ENCODE measurements at regions of chr6 and their contacts with region 1.

Region 1: GRCh38 chr6:169529931-169530751 is 171.7 kb downstream of the WDR27 start:
- DNase-seq: peak; percentile 66
- ATAC-seq: peak; percentile 92
- H3K4me3 Mint-ChIP-seq: no peak overlapping the region
- H3K27ac Mint-ChIP-seq: peak overlapping the region; percentile 61
- H3K4me1 Mint-ChIP-seq: peaks cover 16% of the 10 kb centered on the region
- H3K27me3 Mint-ChIP-seq: no peaks in the 10 kb centered on the region

Region 2: DNA sequence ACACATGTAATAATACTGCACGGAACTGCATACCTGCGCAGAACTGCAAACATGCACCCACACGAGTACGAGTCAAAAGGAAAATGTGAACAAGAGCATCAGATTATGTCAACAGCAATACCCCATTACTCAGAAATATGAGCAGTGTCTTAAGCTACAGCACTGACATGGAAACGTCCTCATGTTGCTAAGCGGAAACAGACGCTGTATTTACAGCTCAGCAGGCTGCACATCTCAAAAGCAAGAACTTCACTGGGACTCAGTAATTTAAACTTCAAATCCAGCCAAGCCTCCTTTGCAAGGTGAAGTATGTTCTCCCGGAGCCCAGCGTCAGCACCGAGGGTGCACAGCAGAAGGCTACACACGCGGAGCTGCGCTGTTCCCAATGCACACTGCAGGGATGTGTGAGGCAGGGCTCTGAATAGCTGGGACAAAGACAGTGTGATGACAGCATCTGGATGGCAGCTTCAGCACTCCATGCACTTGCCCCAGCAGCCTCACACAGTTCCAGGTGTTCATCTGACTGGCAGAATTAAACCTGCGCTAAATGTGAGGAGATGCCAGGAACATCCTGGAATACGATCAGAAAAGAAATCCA is 31.1 kb before region 1 on chr6:
- CTCF ChIA-PET with region 1: no interaction called
- POLR2A ChIA-PET with region 1: no interaction called
- intact Hi-C with region 1: no loop called
- DNase-seq: no peak
- ATAC-seq: no peak
- H3K4me3 Mint-ChIP-seq: no peak overlapping the region
- H3K27ac Mint-ChIP-seq: no peak overlapping the region
- H3K4me1 Mint-ChIP-seq: no peaks in the 10 kb centered on the region
- H3K27me3 Mint-ChIP-seq: no peaks in the 10 kb centered on the region

Region 3: GRCh38 chr6:169556758-169557548 is 26.8 kb after region 1 on chr6:
- CTCF ChIA-PET with region 1: no interaction called
- POLR2A ChIA-PET with region 1: no interaction called
- intact Hi-C with region 1: loop called in 1 of 2 experiments (anchors 1 kb)
- DNase-seq: peak; percentile 72
- ATAC-seq: peak; percentile 100
- H3K4me3 Mint-ChIP-seq: peak overlapping the region; percentile 7
- H3K27ac Mint-ChIP-seq: no peak overlapping the region
- H3K4me1 Mint-ChIP-seq: peaks cover 13% of the 10 kb centered on the region
- H3K27me3 Mint-ChIP-seq: peaks cover 30% of the 10 kb centered on the region